ENCODE measurements at regions of chrX and their contacts with region 1.

Region 1: DNA sequence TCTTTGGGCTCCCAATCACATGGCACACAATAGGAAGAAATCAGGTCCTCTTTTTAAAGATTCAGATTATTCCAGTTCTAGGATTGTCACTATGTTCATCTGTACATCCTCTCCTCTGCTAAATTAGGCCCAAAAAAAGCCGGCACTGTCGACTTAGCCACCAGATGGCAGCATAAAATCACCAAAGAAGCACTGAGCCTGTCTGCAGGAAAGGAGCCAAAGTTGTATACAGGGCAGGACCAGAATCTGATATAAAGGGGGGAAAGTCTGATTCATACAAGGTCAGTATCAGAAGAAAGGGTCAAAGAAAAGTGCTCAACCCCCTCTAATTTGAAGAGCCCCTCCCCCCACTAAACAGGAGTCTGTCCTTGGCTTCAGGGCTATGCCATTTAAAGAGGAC is 292.5 kb downstream of the CHIC1 start:
- DNase-seq: peak in 2 of 3 donors; percentile 43 to 74
- ATAC-seq: peak; percentile 31
- H3K4me3 ChIP-seq: no peak overlapping the region
- H3K4me1 ChIP-seq: no peaks in the 10 kb centered on the region
- CTCF ChIP-seq: peak; percentile 25

Region 2: GRCh38 chrX:74015379-74016019 is 160.0 kb after region 1 on chrX:
- intact Hi-C with region 1: loop called (anchors 5 to 10 kb)
- DNase-seq: peak in 1 of 3 donors; percentile 69
- ATAC-seq: peak; percentile 96
- H3K4me3 ChIP-seq: no peak overlapping the region
- H3K4me1 ChIP-seq: no peaks in the 10 kb centered on the region
- CTCF ChIP-seq: no peak

Region 3: DNA sequence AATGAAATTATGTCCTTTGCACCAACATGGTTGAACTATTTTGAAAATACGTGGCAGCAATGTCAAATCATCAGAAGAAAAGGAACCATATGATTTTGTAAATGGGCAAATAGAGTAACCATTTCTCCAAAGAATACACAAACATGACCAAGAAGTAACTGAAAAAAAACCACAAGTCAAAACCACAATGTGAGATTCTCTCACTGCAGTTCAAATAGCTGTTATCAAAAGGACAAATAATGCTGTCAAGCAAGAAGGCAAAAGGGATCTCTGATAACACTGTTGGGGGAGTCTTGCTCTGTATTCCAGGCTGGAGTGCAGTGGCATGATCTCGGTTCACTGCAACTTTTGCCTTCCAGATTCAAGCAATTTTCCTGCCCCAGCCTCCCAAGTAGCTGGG is 167.7 kb after region 1 on chrX:
- intact Hi-C with region 1: loop called (anchors 5 to 10 kb)
- DNase-seq: no peak
- ATAC-seq: no peak
- H3K4me3 ChIP-seq: no peak overlapping the region
- H3K4me1 ChIP-seq: no peaks in the 10 kb centered on the region
- CTCF ChIP-seq: no peak

Region 4: GRCh38 chrX:74133156-74133796 is 277.7 kb after region 1 on chrX:
- intact Hi-C with region 1: loop called in 1 of 2 experiments (anchors 5 kb)
- DNase-seq: peak in 1 of 3 donors; percentile 40
- ATAC-seq: peak; percentile 87
- H3K4me3 ChIP-seq: no peak overlapping the region
- H3K4me1 ChIP-seq: no peaks in the 10 kb centered on the region
- CTCF ChIP-seq: peak; percentile 19

Region 5: DNA sequence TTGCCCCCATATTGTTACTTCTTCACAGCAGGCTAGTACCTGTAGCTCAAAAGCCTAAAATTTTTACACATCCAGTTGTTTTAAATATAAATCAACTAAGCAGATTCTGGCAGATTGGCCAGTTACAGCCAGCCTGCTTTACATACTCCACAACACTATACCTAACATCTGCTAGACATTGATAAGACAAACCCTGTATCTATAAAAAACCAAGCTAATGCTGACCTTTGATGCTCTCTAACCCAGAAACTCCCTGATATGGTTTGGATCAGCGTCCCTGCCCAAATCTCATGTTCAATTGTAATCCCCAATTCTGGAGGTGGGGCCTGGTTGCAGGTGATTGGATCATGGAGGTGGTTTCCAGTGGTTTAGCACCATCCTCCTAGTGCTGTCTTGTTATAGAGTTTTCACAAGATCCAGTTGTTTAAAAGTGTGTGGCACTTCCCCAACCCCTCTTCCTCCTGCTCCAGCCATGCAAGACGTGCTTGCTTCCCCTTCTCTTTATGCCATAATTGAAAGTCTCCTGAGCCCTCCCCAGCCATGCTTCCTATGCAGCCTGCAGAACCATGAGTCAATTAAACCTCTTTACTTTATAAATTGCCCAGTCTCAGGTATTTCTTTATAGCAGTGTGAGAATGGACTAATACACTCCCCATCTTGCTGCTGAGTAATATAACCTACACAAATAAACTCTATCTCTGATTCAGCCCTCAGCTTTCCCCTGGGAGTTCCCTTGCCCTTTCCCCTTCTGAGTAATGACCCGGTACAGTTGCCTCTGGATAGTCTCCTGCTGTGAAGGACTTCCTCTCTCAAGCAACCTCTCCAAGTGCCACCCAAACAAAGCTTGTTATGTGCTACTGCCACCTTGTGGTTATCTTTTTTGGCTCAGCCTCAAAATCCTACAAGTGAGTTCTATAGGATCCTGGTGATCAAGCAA is 488.1 kb after region 1 on chrX:
- intact Hi-C with region 1: loop called in 1 of 2 experiments (anchors 10 kb)
- DNase-seq: peak in 1 of 3 donors; percentile 83
- ATAC-seq: peak; percentile 99
- H3K4me3 ChIP-seq: no peak overlapping the region
- H3K4me1 ChIP-seq: no peaks in the 10 kb centered on the region
- CTCF ChIP-seq: peak; percentile 17

Measured in mucosa of descending colon (tissue), 3 donors.